Gastrocnemius medialis (tissue), 4 donors: ENCODE measurements at regions of chr4 and their contacts with region 1.

Region 1: DNA sequence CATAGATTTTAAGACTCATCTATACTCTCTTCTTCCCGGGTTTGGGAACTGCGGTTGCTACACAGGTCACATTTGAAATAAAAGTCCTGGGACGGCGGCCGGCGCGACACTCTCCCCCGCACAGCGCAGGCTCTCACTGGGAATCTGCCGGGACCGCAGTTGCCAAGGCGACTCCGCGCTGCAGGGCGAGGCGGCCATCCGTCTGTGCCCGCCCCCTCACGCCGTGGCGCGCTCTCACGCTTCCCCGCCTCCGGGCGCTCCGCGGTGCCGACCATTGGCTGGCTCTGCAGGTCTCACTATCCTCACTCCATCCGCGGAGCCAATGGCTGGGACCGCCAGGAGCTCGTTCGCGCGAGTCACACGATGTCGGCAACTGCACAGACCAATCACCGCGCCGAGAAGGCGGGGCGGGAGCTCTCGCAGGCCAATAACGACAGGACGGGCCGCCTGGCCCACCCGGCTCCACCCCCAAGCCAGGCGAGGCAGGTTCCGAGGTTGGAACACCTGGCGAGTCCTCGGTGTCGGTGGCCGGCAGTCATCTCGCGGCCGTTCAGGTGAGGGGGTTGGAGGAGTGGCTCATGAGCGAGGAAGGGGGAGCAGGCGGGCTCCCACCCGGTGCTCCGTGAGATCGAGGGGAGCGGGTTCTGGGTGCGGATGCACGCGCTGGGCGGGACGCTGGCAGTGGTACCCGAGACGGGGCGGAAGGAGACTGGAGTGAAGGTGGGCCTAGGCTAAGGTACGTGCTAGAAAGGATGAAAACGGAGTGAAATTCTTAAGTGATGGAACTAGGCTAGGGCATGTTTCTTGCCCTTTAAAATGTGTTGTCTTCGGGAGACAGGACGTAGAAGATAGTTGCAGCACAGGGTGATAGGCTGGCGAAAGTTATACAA is at the start of gene MSMO1:
- DNase-seq: peak; percentile 98 to 99
- ATAC-seq: peak; percentile 99
- H3K4me3 ChIP-seq: peak within 1 kb of the TSS; percentile 86 to 99 (median 92)
- H3K27ac ChIP-seq: peak within 1 kb of the TSS; percentile 70 to 82 (median 78)
- H3K4me1 ChIP-seq: peaks cover 10 to 14% of the 10 kb centered on the region in 2 donors
- H3K27me3 ChIP-seq: no peaks in the 10 kb centered on the region
- CTCF ChIP-seq: no peak
- POLR2A ChIP-seq: peak; percentile 42 to 84
- total RNA-seq, gene MSMO1: 3.9 to 7.7 (median 4.1) TPM

Region 2: GRCh38 chr4:165207431-165208220 is 119.8 kb before region 1 on chr4 and contains the start of gene KLHL2:
- in situ Hi-C with region 1: loop called in 2 of 4 experiments (anchors 10 to 25 kb)
- intact Hi-C with region 1: loop called (anchors 2 kb)
- DNase-seq: peak; percentile 41 to 42
- ATAC-seq: peak; percentile 81 to 83
- H3K4me3 ChIP-seq: peak within 1 kb of the TSS; percentile 62 to 83 (median 72)
- H3K27ac ChIP-seq: peak within 1 kb of the TSS in 3 of 4 donors; percentile 58 to 71 (median 66)
- H3K4me1 ChIP-seq: peaks cover 0 to 8% of the 10 kb centered on the region in 2 donors
- H3K27me3 ChIP-seq: no peaks in the 10 kb centered on the region
- CTCF ChIP-seq: no peak
- POLR2A ChIP-seq: peak in 1 of 2 donors; percentile 54
- total RNA-seq, gene KLHL2: 3.6 to 7.9 (median 6.4) TPM

Region 3: DNA sequence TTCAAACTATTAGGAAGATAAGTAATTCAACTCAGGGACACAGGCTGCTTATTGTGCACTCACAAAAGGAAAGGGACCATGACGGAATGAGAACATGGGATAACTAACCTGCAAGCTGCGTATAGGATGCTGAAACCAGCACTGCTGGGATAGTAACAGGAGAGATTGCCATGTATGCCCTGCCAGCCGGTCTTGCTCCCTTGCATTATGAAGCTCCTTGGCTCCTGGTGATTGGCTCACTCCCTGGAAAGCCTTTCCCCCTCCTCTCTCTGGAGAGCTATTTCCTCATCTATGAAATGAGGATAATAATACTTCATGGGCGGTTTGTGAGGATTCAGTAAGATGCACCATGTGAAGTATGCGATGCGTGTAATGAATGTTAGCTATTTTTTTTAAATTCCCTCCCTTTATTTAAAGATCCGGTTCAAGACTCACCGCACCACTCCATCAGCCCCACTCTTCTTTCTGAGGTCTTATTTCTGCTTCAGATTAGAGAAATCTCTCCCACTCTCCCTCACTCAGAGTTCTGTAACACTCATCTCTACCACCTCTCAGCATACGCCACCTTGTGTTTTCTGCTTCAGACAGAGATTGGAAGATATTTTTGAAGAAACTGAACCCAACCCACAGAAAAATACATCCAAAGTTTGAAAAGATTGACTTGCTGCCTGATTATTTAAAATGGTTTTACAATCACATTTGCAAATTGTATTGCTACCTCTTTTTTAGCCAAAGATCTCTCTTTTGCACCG is 18.4 kb after region 1 on chr4:
- in situ Hi-C with region 1: no loop called
- intact Hi-C with region 1: no loop called
- DNase-seq: no peak
- ATAC-seq: no peak
- H3K4me3 ChIP-seq: no peak overlapping the region
- H3K27ac ChIP-seq: no peak overlapping the region
- H3K4me1 ChIP-seq: no peaks in the 10 kb centered on the region
- H3K27me3 ChIP-seq: no peaks in the 10 kb centered on the region
- CTCF ChIP-seq: no peak
- POLR2A ChIP-seq: no peak

Region 4: GRCh38 chr4:165524532-165525190 is 197.2 kb after region 1 on chr4:
- in situ Hi-C with region 1: no loop called
- intact Hi-C with region 1: no loop called
- DNase-seq: no peak
- ATAC-seq: no peak
- H3K4me3 ChIP-seq: no peak overlapping the region
- H3K27ac ChIP-seq: no peak overlapping the region
- H3K4me1 ChIP-seq: no peaks in the 10 kb centered on the region
- H3K27me3 ChIP-seq: no peaks in the 10 kb centered on the region
- CTCF ChIP-seq: no peak
- POLR2A ChIP-seq: no peak